PC-3 (cell line): ENCODE measurements at regions of chr13 and their contacts with region 1.

Region 1: DNA sequence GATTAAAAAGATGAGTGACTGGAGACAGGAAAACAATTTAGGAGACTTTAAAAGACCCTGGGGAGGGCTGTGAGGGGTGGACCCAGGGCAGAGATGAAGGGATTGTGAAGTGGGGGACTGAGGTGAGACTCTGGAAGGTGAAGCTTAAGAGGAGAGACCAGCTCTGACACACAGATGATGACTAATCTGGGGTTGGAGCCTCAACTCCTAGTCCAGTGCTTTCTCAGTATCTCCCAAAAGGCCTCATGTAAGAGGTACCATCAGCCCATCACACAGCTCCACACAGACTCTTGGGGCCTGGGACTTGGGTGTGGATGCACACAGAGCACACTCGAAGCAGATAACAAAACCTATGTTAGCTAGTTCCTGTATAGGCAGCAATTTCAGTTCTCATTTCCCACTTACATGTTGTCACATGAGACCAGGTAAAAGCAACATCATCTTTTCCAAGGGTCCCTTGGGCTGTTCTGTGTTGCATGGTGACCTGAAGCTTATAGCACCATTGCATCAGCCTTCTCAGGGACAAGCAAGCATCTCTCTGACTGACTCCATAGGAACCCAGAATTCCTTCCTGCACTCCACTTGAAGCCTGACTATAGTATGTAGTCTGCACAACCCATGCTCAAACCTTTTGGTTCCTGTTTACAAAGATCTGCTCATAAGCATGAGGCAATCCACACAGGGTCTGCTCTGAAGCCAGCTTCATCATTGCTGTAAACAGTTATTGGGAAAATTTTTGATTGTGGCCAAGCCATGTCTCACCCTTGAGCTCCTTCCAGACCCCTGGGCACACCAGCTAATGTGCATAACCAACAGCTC is 88.6 kb upstream of the MYCBP2 start:
- DNase-seq: no peak
- ATAC-seq: no peak
- H3K4me3 ChIP-seq: no peak overlapping the region
- H3K27ac ChIP-seq: no peak overlapping the region
- H3K4me1 ChIP-seq: peaks cover 16% of the 10 kb centered on the region
- H3K27me3 ChIP-seq: no peaks in the 10 kb centered on the region
- CTCF ChIP-seq: no peak

Region 2: DNA sequence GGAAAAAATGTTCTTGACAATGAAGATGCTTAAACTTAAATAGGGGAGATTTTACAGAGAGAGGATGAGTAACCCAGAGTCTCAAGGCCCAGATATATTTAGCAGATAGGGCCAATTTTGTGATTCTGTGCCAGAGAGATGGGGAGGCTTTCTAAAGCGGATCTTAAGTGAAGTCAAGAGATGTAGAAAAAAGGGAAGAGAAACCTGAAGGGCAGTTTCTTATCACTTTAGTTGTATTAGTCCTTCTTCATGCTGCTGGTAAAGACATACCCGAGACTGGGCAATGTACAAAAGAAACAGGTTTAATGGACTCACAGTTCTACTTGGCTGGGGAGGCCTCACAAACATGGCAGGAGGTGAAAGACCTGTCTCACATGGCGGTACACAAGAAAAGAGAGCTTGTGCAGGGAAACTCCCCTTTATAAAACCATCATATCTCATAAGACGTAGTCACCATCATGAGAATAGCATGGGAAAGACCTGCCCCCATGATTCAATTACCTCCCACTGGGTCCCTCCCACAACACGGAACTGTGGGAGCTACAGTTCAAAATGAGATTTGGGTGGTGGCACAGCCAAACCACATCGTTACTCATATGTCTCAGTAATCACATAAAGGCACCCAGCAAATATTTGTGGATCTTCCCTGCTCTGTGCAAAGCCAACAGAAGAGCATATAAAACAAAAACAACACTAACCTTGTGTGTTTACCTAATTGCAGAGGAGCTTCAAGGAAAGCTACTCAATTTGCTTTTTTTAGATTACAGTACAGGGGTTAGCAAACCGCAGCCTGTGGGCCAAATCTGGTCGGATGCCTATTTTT is 14.1 kb after region 1 on chr13:
- CTCF ChIA-PET with region 1: no interaction called
- POLR2A ChIA-PET with region 1: no interaction called
- intact Hi-C with region 1: loop called (anchors 1 kb)
- DNase-seq: peak; percentile 81
- ATAC-seq: peak; percentile 99
- H3K4me3 ChIP-seq: no peak overlapping the region
- H3K27ac ChIP-seq: peak overlapping the region; percentile 65
- H3K4me1 ChIP-seq: peaks cover 7% of the 10 kb centered on the region
- H3K27me3 ChIP-seq: no peaks in the 10 kb centered on the region
- CTCF ChIP-seq: no peak

Region 3: GRCh38 chr13:77448679-77449078 is 33.2 kb after region 1 on chr13:
- CTCF ChIA-PET with region 1: no interaction called
- POLR2A ChIA-PET with region 1: no interaction called
- intact Hi-C with region 1: no loop called
- DNase-seq: no peak
- ATAC-seq: no peak
- H3K4me3 ChIP-seq: no peak overlapping the region
- H3K27ac ChIP-seq: no peak overlapping the region
- H3K4me1 ChIP-seq: no peaks in the 10 kb centered on the region
- H3K27me3 ChIP-seq: no peaks in the 10 kb centered on the region
- CTCF ChIP-seq: no peak

Region 4: DNA sequence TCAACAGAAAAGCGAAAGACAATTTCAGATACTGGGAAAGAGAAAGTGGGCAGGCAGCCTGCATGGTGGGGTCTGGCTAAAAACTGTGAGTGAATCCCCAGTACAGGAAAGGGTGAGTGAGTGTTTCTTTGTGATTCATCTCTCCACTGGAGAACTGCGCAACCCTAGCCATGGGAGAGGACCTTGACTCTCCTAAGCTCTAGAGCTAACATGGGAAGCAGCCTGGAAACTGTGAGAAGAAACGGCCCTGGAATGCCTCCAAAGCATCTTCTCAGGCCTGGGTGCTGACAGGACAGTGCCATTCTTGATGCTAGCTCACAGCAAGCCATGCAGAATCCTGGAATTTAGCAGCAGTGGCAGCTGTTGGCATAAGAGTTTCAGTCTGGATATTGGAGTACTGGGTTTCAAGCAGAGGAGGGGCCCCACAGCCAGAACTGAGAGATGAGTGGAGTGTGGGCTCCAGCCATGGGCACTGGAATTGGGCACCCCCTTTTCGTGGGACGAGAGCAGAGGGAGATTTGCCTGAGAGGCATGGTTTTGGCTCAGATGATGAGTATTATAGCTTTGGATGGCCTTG is 263.3 kb after region 1 on chr13:
- CTCF ChIA-PET with region 1: no interaction called
- POLR2A ChIA-PET with region 1: no interaction called
- intact Hi-C with region 1: no loop called
- DNase-seq: no peak
- ATAC-seq: no peak
- H3K4me3 ChIP-seq: no peak overlapping the region
- H3K27ac ChIP-seq: no peak overlapping the region
- H3K4me1 ChIP-seq: no peaks in the 10 kb centered on the region
- H3K27me3 ChIP-seq: no peaks in the 10 kb centered on the region; the same call in 1 of the 2 replicates
- CTCF ChIP-seq: no peak